ENCODE measurements at regions of chr5 and their contacts with region 1.

Region 1: GRCh38 chr5:126852091-126852571 is 75.2 kb downstream of the LMNB1 start:
- DNase-seq: peak in 4 of 5 donors; percentile 27 to 44 (median 34)
- H3K4me3 ChIP-seq: peak overlapping the region in 1 of 2 donors; percentile 29
- H3K4me3 Mint-ChIP-seq: peak overlapping the region; percentile 65 to 87 (median 78)
- H3K27ac ChIP-seq: peak overlapping the region; percentile 8
- H3K27ac Mint-ChIP-seq: peak overlapping the region; percentile 89 to 97 (median 95)
- H3K4me1 ChIP-seq: peaks cover 36% of the 10 kb centered on the region
- H3K4me1 Mint-ChIP-seq: peaks cover 33 to 50% (median 45%) of the 10 kb centered on the region in 4 donors
- H3K27me3 ChIP-seq: no peaks in the 10 kb centered on the region
- H3K27me3 Mint-ChIP-seq: no peaks in the 10 kb centered on the region

Region 2: DNA sequence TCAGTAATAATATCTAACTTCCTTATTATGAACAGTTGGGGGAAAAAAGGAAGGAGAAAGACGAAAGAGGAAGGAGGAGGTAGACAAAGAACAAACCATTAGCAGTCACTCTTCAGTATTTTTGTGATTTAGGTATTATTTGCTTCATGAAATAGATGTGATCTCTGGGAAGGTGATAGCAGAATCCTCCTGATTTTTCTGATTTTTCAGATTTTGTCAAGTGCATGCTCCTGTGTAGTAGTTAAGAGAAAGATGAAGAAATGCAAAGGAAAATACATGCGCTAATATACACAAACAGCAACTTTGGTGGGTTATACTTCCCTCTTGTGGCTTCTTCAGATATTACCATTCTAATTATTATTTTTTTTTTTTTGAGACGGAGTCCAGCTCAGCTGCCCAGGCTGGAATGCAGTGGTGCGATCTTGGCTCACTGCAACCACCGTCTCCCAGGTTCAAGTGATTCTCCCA is 43.6 kb before region 1 on chr5:
- CTCF ChIA-PET with region 1: interaction called, 13 read pairs
- POLR2A ChIA-PET with region 1: interaction called, 26 read pairs
- intact Hi-C with region 1: loop called (anchors 5 kb)
- DNase-seq: peak in 4 of 5 donors; percentile 21 to 40 (median 30)
- H3K4me3 ChIP-seq: no peak overlapping the region
- H3K4me3 Mint-ChIP-seq: no peak overlapping the region
- H3K27ac ChIP-seq: no peak overlapping the region
- H3K27ac Mint-ChIP-seq: peak overlapping the region in 2 of 7 donors; percentile 1 to 33
- H3K4me1 ChIP-seq: peaks cover 25% of the 10 kb centered on the region
- H3K4me1 Mint-ChIP-seq: peaks cover 27 to 36% (median 30%) of the 10 kb centered on the region in 4 donors
- H3K27me3 ChIP-seq: no peaks in the 10 kb centered on the region
- H3K27me3 Mint-ChIP-seq: no peaks in the 10 kb centered on the region

Region 3: GRCh38 chr5:126972062-126972895 is 120.1 kb after region 1 on chr5:
- CTCF ChIA-PET with region 1: no interaction called
- POLR2A ChIA-PET with region 1: interaction called, 3 read pairs
- intact Hi-C with region 1: loop called (anchors 5 kb)
- DNase-seq: peak; percentile 12 to 39 (median 31)
- H3K4me3 ChIP-seq: peak overlapping the region in 1 of 2 donors; percentile 23
- H3K4me3 Mint-ChIP-seq: peak overlapping the region in 7 of 8 donors; percentile 78 to 88 (median 82)
- H3K27ac ChIP-seq: peak overlapping the region; percentile 15
- H3K27ac Mint-ChIP-seq: peak overlapping the region; percentile 61 to 91 (median 84)
- H3K4me1 ChIP-seq: peaks cover 22% of the 10 kb centered on the region
- H3K4me1 Mint-ChIP-seq: peaks cover 19 to 31% (median 22%) of the 10 kb centered on the region in 4 donors
- H3K27me3 ChIP-seq: no peaks in the 10 kb centered on the region
- H3K27me3 Mint-ChIP-seq: no peaks in the 10 kb centered on the region

Region 4: DNA sequence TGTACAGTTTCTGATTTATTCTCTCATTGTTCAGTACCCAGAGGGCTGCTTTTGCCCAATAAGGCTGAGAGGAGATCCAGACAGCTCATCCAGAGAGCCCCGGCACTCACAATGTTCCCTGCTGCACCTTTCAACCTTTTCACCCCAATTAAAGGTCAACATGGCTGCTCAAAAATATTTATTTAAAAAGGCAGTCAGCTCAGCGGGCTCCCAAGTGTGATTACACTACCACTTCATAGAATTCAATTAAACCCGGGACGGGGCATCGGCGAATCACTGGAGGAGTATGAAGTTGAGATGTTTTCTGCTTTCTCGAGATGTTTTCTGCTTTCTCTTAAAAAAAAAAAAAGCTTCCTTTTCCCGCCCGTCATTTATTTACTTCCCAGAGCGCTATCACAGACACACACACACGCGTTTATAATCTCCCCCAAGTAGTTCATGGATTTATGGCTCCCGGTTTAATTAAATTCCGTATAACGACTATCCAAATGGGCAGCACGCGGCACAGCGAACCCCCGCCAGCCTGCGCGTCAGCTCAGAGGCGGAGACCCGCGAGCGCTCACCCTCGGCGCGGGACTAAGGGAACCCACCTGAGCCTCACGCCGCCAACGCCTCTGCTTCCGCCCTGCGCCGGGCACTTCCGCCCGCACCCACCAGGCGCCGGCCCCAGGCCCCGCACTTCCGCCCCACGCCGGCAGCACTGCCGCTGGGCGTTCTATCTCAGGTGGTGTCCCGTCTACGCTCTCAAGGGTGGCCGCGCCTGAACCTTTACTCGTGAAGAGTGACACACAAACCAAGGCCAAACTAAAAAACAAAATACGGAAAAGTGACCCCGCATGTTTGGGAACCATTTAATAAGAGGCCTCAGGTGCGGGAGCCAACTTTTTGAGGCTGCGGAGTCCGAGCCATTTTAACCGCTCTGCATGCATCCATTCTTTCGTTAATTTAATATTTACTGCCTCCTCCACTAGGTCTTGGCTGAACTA is 221.0 kb after region 1 on chr5 and contains the start of gene C5orf63:
- CTCF ChIA-PET with region 1: no interaction called
- POLR2A ChIA-PET with region 1: interaction called, 13 read pairs
- intact Hi-C with region 1: no loop called
- DNase-seq: peak; percentile 53 to 70 (median 59)
- H3K4me3 ChIP-seq: peak within 1 kb of the TSS; percentile 64 to 71
- H3K4me3 Mint-ChIP-seq: peak within 1 kb of the TSS; percentile 88 to 97 (median 91)
- H3K27ac ChIP-seq: peak within 1 kb of the TSS; percentile 33
- H3K27ac Mint-ChIP-seq: peak within 1 kb of the TSS; percentile 45 to 95 (median 91)
- H3K4me1 ChIP-seq: peaks cover 16% of the 10 kb centered on the region
- H3K4me1 Mint-ChIP-seq: peaks cover 10 to 21% (median 17%) of the 10 kb centered on the region in 4 donors
- H3K27me3 ChIP-seq: no peaks in the 10 kb centered on the region
- H3K27me3 Mint-ChIP-seq: no peaks in the 10 kb centered on the region
- total RNA-seq, gene C5orf63: 13.1 to 17.9 TPM

Region 5: GRCh38 chr5:127229185-127229889 is 377.2 kb after region 1 on chr5:
- CTCF ChIA-PET with region 1: no interaction called
- POLR2A ChIA-PET with region 1: interaction called, 13 read pairs
- intact Hi-C with region 1: loop called (anchors 5 kb)
- DNase-seq: peak; percentile 54 to 64 (median 59)
- H3K4me3 ChIP-seq: peak overlapping the region in 1 of 2 donors; percentile 78
- H3K4me3 Mint-ChIP-seq: peak overlapping the region; percentile 55 to 88 (median 80)
- H3K27ac ChIP-seq: peak overlapping the region; percentile 45
- H3K27ac Mint-ChIP-seq: peak overlapping the region; percentile 45 to 87 (median 82)
- H3K4me1 ChIP-seq: peaks cover 16% of the 10 kb centered on the region
- H3K4me1 Mint-ChIP-seq: peaks cover 15 to 24% (median 18%) of the 10 kb centered on the region in 4 donors
- H3K27me3 ChIP-seq: no peaks in the 10 kb centered on the region
- H3K27me3 Mint-ChIP-seq: no peaks in the 10 kb centered on the region

Measured in CD4-positive, alpha-beta memory T cell (primary cell).